PC-3 (cell line): ENCODE measurements at regions of chr1 and their contacts with region 1.

Region 1: GRCh38 chr1:53896635-53897229 is 2.7 kb downstream of the DIO1 start:
- DNase-seq: peak; percentile 80
- ATAC-seq: peak; percentile 78
- H3K4me3 ChIP-seq: no peak overlapping the region
- H3K27ac ChIP-seq: peak overlapping the region; percentile 55
- H3K4me1 ChIP-seq: peaks cover 28% of the 10 kb centered on the region
- H3K27me3 ChIP-seq: no peaks in the 10 kb centered on the region
- CTCF ChIP-seq: no peak

Region 2: DNA sequence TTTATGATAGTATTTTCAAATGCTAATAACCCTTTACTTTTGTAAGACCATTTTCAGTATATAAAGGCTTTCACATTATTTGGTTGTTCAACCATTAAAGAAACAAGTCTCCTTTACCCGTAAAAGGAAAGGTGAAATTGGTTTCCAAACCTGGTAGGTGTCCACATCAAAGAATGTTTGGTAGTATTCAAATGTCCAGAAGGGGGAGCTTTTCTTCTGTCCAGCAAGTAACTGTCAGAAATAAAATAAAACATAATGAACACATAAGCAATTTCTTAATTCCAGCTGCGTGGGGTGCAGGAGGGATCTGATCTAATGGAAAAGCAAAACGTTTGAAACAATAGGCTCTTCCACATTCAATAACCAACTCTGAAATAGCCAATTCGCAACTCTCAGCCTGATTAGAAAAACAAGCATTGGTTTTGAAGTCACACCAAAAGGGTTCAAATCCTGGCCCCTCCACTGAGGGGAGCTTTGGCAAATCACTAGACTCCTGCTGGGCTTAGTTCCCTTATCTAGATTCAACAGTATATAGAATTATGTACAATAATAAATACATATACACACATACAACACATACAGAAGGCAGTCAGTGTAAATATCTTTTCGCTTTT is 18.1 kb before region 1 on chr1:
- CTCF ChIA-PET with region 1: no interaction called
- POLR2A ChIA-PET with region 1: interaction called, 12 read pairs
- intact Hi-C with region 1: no loop called
- DNase-seq: peak; percentile 76
- ATAC-seq: peak; percentile 54
- H3K4me3 ChIP-seq: no peak overlapping the region
- H3K27ac ChIP-seq: no peak overlapping the region
- H3K4me1 ChIP-seq: no peaks in the 10 kb centered on the region
- H3K27me3 ChIP-seq: no peaks in the 10 kb centered on the region
- CTCF ChIP-seq: peak; percentile 89